Sigmoid colon (tissue), 7 donors: ENCODE measurements at regions of chr3 and their contacts with region 1.

Region 1: GRCh38 chr3:24680214-24680967 is 185.7 kb upstream of the THRB start:
- DNase-seq: peak; percentile 78
- H3K4me3 ChIP-seq: no peak overlapping the region
- H3K27ac ChIP-seq: no peak overlapping the region
- H3K4me1 ChIP-seq: peaks cover 0 to 16% (median 8%) of the 10 kb centered on the region in 4 donors
- H3K27me3 ChIP-seq: no peaks in the 10 kb centered on the region
- CTCF ChIP-seq: peak in 3 of 4 experiments; percentile 40 to 62 (median 57)
- EP300 ChIP-seq: no peak
- POLR2A ChIP-seq: no peak

Region 2: GRCh38 chr3:23888617-23889228 is 791.7 kb before region 1 on chr3:
- intact Hi-C with region 1: loop called (anchors 5 kb)
- DNase-seq: no peak
- H3K4me3 ChIP-seq: no peak overlapping the region
- H3K27ac ChIP-seq: no peak overlapping the region
- H3K4me1 ChIP-seq: peaks cover 0 to 7% (median 0%) of the 10 kb centered on the region in 4 donors
- H3K27me3 ChIP-seq: no peaks in the 10 kb centered on the region
- CTCF ChIP-seq: peak; percentile 65 to 86 (median 76)
- EP300 ChIP-seq: no peak
- POLR2A ChIP-seq: peak in 1 of 2 donors; percentile 9

Region 3: DNA sequence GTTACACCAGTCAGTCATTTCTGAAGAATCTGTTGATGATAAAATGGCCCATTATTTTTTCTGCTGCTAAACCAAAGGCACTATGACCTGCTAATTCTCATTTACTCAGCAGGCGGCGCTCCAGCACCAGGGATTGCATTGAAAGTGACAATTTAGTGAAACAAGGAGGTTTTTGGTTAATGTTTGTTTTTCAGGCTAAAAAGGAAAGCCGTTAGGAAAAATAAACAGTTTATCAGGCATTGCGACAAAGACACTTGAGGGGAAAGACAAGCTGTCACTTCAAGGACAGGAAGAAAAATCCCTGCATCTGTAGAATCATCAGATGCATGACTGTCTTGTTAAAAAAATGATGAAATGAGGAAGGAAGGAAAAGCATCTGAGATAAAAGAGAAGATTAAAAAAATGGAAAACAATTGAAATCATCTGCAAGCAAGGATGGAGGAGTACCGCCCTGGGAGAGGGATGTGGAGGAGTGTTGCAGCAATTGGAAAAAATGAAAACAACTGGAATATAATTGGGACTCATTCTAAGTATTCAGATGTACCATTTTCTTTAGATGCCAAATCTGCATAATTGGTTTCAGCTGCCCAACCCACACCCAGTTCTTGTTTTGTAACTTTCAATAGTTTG is 681.3 kb before region 1 on chr3:
- intact Hi-C with region 1: loop called (anchors 1 kb)
- DNase-seq: peak; percentile 80
- H3K4me3 ChIP-seq: no peak overlapping the region
- H3K27ac ChIP-seq: no peak overlapping the region
- H3K4me1 ChIP-seq: peaks cover 0 to 16% (median 13%) of the 10 kb centered on the region in 4 donors
- H3K27me3 ChIP-seq: no peaks in the 10 kb centered on the region
- CTCF ChIP-seq: peak; percentile 87 to 98 (median 94)
- EP300 ChIP-seq: no peak
- POLR2A ChIP-seq: no peak

Region 4: GRCh38 chr3:24185738-24186384 is 494.5 kb before region 1 on chr3:
- intact Hi-C with region 1: loop called (anchors 10 kb)
- DNase-seq: no peak
- H3K4me3 ChIP-seq: no peak overlapping the region
- H3K27ac ChIP-seq: no peak overlapping the region
- H3K4me1 ChIP-seq: peaks cover 0 to 17% (median 4%) of the 10 kb centered on the region in 4 donors
- H3K27me3 ChIP-seq: no peaks in the 10 kb centered on the region
- CTCF ChIP-seq: peak in 3 of 4 experiments; percentile 30 to 63 (median 56)
- EP300 ChIP-seq: no peak
- POLR2A ChIP-seq: no peak

Region 5: DNA sequence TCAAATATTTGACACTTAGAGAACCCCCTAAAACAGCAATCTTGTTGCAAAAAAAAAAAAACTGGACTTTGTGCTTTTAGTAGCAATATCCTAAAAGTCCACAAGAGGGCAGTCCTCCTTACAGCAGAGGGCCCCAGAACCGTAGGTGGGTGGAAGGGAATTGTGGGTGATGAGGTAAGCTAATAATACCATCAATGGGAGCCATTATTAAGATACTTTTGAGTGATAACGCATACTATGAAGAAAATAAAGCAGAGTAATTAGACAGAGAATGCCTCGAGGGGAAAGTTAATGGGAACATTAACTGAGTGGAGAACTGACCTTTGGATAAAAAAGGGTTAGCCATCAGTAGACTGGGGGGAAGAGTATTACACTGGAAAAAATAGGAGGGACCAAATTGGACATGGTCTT is 415.6 kb before region 1 on chr3:
- intact Hi-C with region 1: loop called (anchors 5 kb)
- DNase-seq: no peak
- H3K4me3 ChIP-seq: no peak overlapping the region
- H3K27ac ChIP-seq: no peak overlapping the region
- H3K4me1 ChIP-seq: peaks cover 0 to 42% (median 28%) of the 10 kb centered on the region in 4 donors
- H3K27me3 ChIP-seq: no peaks in the 10 kb centered on the region
- CTCF ChIP-seq: peak; percentile 31 to 69 (median 64)
- EP300 ChIP-seq: no peak
- POLR2A ChIP-seq: no peak

Region 6: GRCh38 chr3:24494618-24495325 is 185.6 kb before region 1 on chr3 and contains the start of gene THRB:
- intact Hi-C with region 1: loop called (anchors 5 kb)
- DNase-seq: peak; percentile 87
- H3K4me3 ChIP-seq: peak within 1 kb of the TSS; percentile 61 to 91 (median 72)
- H3K27ac ChIP-seq: peak within 1 kb of the TSS; percentile 89 to 97 (median 94)
- H3K4me1 ChIP-seq: peaks cover 0 to 47% (median 44%) of the 10 kb centered on the region in 4 donors
- H3K27me3 ChIP-seq: no peaks in the 10 kb centered on the region
- CTCF ChIP-seq: peak in 2 of 4 experiments; percentile 6 to 42
- EP300 ChIP-seq: no peak
- POLR2A ChIP-seq: peak; percentile 38 to 64
- total RNA-seq, gene THRB: 29.7 to 49.5 (median 35.6) TPM

Region 7: DNA sequence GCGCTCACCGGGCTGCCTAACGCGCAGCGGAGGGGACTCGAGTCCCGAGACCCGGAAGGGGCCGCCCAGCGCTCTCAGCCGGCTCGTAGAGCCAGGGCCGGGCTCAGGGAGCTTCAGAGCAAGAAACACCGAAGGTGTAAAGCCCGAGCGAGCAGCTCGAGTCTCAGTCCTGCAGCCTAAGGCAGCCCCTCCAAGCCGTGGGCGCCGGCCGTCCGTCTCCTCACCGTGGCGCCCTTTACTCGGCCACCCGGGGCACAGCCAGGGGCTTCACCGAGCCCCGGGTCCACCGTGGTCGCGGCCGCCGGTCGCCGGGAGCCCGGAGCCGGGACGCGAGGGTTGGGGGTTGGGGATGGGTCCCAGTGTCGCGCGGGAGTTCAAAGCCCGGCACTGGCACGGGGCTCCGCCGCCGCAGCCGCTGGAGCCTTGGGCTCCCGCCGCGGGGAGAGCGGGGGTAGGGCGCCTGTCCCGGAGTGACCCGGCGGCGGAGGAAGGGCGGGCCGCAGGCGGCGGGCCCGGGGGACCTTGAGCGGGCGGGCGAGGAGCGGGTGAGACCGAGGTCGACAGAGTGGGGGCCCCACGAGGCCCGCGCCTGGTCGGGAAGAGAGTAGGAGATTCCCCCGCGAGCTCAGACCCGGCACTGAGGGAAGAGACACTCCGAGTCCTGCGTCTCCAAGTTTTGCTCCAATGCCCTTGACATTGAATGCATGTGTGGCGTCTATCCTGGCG is 158.8 kb before region 1 on chr3:
- intact Hi-C with region 1: loop called (anchors 5 kb)
- DNase-seq: peak; percentile 80
- H3K4me3 ChIP-seq: peak overlapping the region; percentile 54 to 86 (median 81)
- H3K27ac ChIP-seq: peak overlapping the region; percentile 82 to 92 (median 90)
- H3K4me1 ChIP-seq: peaks cover 0 to 22% (median 14%) of the 10 kb centered on the region in 4 donors
- H3K27me3 ChIP-seq: no peaks in the 10 kb centered on the region
- CTCF ChIP-seq: peak in 1 of 4 experiments; percentile 14
- EP300 ChIP-seq: no peak
- POLR2A ChIP-seq: no peak

Region 8: DNA sequence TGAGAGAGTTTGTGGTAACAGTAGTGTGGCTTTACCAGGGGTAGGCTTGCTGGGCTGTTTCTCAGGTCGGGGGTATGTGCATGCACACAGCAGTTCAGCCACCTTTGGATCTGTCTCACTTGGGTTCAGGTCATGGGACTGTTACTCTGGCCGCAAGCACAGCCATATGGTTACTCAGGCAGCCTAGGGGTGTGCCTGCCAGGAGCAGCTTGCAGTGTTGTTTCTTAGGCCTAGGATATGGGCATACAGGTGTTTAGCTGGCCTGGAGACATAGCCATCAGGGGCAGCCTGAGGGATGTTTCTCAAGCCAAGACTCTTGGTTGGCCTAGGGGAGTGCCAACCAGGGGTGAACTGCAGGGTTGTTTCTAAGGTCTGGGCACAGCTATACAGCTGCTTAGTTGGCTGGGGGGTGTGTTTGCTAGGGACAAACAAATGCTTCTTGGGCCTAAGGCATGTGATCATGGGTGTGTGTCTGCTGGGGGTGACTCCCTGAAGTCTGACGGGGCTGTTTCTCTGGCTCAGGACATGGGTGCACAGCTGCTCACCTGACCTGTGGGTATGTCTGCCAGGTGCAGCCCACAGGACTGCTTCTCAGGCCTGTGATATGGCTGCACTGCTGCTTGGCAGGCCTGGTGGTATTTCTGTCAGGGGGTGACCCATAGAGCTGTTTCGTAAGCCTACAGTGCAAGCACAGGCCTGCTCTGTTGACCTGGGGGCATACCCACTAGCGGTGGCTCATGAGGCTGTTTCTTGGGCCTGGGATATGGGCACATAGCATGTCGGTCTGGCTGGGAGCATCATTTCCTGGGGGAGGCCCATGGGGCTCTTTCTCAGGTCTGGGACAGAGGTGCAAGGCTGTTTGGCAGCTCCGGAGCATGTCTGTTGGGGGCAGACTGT is 17.7 kb before region 1 on chr3:
- intact Hi-C with region 1: no loop called
- DNase-seq: no peak
- H3K4me3 ChIP-seq: no peak overlapping the region
- H3K27ac ChIP-seq: no peak overlapping the region
- H3K4me1 ChIP-seq: peaks cover 0 to under 1% (median 0%) of the 10 kb centered on the region in 4 donors
- H3K27me3 ChIP-seq: no peaks in the 10 kb centered on the region
- CTCF ChIP-seq: no peak
- EP300 ChIP-seq: no peak
- POLR2A ChIP-seq: no peak

Region 9: DNA sequence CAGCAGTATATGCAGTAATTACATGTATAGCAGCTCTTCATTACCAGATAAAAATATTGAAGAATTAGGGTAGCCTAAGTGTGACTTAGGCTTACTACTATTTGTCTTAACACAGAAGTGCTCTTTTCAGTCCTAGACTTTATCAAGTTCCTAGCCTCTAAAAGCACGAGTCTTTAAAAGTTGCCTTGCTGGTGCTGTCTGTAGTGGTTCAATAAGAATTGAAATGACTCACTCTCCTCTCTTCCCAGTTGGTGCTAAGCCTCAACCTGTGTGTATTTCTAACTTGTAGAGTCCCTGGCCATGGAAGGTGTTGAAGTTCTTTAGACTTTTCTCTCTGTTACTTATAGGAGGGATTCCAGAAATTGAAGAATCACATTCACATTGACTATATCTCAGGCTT is 209.6 kb after region 1 on chr3:
- intact Hi-C with region 1: no loop called
- DNase-seq: no peak
- H3K4me3 ChIP-seq: no peak overlapping the region
- H3K27ac ChIP-seq: no peak overlapping the region
- H3K4me1 ChIP-seq: no peaks in the 10 kb centered on the region
- H3K27me3 ChIP-seq: no peaks in the 10 kb centered on the region
- CTCF ChIP-seq: no peak
- EP300 ChIP-seq: no peak
- POLR2A ChIP-seq: no peak